CD8-positive, alpha-beta T cell (primary cell): ENCODE measurements at regions of chr1 and their contacts with region 1.

Region 1: GRCh38 chr1:27392096-27392777 is at the start of gene GPR3:
- DNase-seq: peak; percentile 79 to 96 (median 92)
- ATAC-seq: peak; percentile 89
- H3K4me3 ChIP-seq: peak within 1 kb of the TSS; percentile 31 to 65
- H3K4me3 Mint-ChIP-seq: peak within 1 kb of the TSS; percentile 83
- H3K27ac ChIP-seq: peak within 1 kb of the TSS in 1 of 2 experiments; percentile 32
- H3K27ac Mint-ChIP-seq: peak within 1 kb of the TSS; percentile 64
- H3K4me1 ChIP-seq: peaks cover 27% of the 10 kb centered on the region
- H3K4me1 Mint-ChIP-seq: peaks cover 12% of the 10 kb centered on the region
- H3K27me3 ChIP-seq: no peaks in the 10 kb centered on the region
- H3K27me3 Mint-ChIP-seq: no peaks in the 10 kb centered on the region
- CTCF ChIP-seq: peak; percentile 35
- total RNA-seq, gene GPR3: 1.1 TPM in 1 of 2 experiments, not detected in the other

Region 2: DNA sequence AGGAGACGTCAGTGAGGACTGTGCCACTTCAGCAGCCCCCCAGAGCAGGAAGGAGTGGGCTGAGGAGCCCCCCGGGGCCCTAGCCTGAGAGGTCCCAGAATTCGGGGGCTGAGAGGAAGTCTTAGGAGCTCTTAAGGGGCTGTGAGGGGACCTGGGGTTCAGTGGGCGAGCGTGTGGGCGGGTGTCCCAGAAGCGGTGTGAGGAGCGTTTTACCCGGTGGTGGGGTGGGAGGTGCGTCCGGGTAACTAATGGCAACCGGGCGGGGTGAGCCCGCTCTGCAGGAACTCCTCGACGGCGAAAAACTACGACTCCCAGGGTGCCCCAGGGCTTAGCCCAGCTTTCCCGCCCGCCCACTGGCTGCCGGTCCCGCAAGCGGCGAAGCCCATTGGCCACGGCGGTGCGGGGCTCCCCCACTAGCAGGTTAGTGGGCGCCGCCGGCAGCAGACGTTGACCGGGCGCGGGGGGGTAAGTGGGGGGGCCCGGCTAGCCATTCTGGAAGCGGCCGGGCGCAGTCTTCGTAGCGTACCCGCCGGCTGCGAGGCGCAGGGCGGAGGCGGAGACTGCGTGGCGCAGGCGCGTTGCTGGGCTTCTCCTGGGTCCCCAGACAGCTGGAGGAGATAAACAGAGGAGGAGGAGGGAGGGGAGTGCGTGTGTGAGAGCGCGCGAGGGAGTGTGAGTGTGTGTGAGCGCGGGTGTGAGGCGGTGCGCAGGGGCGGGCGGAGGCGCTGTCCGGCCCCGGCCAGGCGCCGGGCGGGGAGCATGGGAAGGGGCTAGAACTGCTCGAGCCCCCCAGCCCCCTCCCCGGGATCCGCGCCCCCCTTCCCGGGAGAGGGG is 158.0 kb before region 1 on chr1 and contains the start of gene WDTC1:
- CTCF ChIA-PET with region 1: no interaction called
- POLR2A ChIA-PET with region 1: no interaction called
- intact Hi-C with region 1: loop called in 1 of 2 experiments (anchors 5 kb)
- DNase-seq: peak; percentile 97 to 99 (median 98)
- ATAC-seq: peak; percentile 90
- H3K4me3 ChIP-seq: peak within 1 kb of the TSS; percentile 58 to 66
- H3K4me3 Mint-ChIP-seq: peak within 1 kb of the TSS; percentile 99
- H3K27ac ChIP-seq: peak within 1 kb of the TSS; percentile 74 to 93
- H3K27ac Mint-ChIP-seq: peak within 1 kb of the TSS; percentile 95
- H3K4me1 ChIP-seq: peaks cover 25% of the 10 kb centered on the region
- H3K4me1 Mint-ChIP-seq: peaks cover 37% of the 10 kb centered on the region
- H3K27me3 ChIP-seq: no peaks in the 10 kb centered on the region
- H3K27me3 Mint-ChIP-seq: no peaks in the 10 kb centered on the region
- CTCF ChIP-seq: no peak
- total RNA-seq, gene WDTC1: 17.8 to 18.1 TPM

Region 3: GRCh38 chr1:27321813-27322577 is 70.2 kb before region 1 on chr1 and contains the start of gene TMEM222:
- CTCF ChIA-PET with region 1: interaction called, 15 read pairs
- POLR2A ChIA-PET with region 1: no interaction called
- intact Hi-C with region 1: loop called in 1 of 2 experiments (anchors 1 kb)
- DNase-seq: peak; percentile 95 to 99 (median 97)
- ATAC-seq: peak; percentile 93
- H3K4me3 ChIP-seq: peak within 1 kb of the TSS; percentile 95 to 99
- H3K4me3 Mint-ChIP-seq: peak within 1 kb of the TSS; percentile 98
- H3K27ac ChIP-seq: peak within 1 kb of the TSS; percentile 88 to 95
- H3K27ac Mint-ChIP-seq: peak within 1 kb of the TSS; percentile 97
- H3K4me1 ChIP-seq: peaks cover 40% of the 10 kb centered on the region
- H3K4me1 Mint-ChIP-seq: peaks cover 48% of the 10 kb centered on the region
- H3K27me3 ChIP-seq: no peaks in the 10 kb centered on the region
- H3K27me3 Mint-ChIP-seq: no peaks in the 10 kb centered on the region
- CTCF ChIP-seq: no peak
- total RNA-seq, gene TMEM222: 24.1 to 25.2 TPM

Region 4: DNA sequence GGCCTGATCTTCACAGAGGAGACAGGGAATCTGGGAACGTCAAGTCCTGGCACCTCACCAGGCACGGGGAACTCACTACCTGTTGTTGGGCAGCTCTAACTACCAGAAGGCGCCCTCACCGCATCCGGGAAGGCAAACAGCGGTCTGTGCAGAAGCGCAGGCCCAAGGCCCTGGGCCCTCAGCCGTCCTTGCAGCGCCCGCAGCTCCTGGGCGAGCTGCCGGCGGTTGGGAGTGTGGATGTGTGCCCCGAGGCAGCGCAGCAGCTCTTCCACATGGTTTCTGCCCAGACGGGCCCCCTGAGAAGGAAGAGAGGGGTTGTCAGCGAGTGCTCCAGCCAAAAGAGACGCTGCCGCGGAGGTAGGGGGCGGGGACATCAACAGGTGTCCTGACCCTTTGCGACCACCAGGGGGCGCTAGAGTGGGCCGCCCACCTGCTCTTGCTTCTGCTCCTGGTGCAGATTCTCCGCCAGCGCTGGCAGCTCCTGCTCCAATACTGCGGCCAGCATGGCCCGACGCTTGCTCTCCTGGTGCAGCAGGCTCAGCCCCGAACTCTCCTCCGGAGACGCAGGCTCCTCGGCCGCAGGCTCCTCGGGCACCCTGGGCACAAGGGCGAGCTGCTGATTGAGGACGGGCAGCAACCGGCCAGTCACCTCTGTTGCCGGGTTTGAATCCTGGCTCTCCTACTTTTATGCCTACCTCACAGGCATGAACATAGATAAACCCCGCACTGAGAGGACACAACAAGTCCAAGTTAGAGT is 34.8 kb before region 1 on chr1:
- CTCF ChIA-PET with region 1: interaction called, 140 read pairs
- POLR2A ChIA-PET with region 1: interaction called, 9 read pairs
- intact Hi-C with region 1: loop called (anchors 1 kb)
- DNase-seq: peak; percentile 64 to 93 (median 81)
- ATAC-seq: peak; percentile 78
- H3K4me3 ChIP-seq: peak overlapping the region; percentile 57 to 78
- H3K4me3 Mint-ChIP-seq: peak overlapping the region; percentile 86
- H3K27ac ChIP-seq: peak overlapping the region; percentile 38 to 59
- H3K27ac Mint-ChIP-seq: peak overlapping the region; percentile 89
- H3K4me1 ChIP-seq: peaks cover 46% of the 10 kb centered on the region
- H3K4me1 Mint-ChIP-seq: peaks cover 55% of the 10 kb centered on the region
- H3K27me3 ChIP-seq: no peaks in the 10 kb centered on the region
- H3K27me3 Mint-ChIP-seq: no peaks in the 10 kb centered on the region
- CTCF ChIP-seq: peak; percentile 91

Region 5: GRCh38 chr1:27556781-27557595 is 164.8 kb after region 1 on chr1:
- CTCF ChIA-PET with region 1: interaction called, 11 read pairs
- POLR2A ChIA-PET with region 1: no interaction called
- intact Hi-C with region 1: no loop called
- DNase-seq: peak; percentile 62 to 85 (median 76)
- ATAC-seq: peak; percentile 96
- H3K4me3 ChIP-seq: no peak overlapping the region
- H3K4me3 Mint-ChIP-seq: peak overlapping the region; percentile 30
- H3K27ac ChIP-seq: no peak overlapping the region
- H3K27ac Mint-ChIP-seq: peak overlapping the region; percentile 58
- H3K4me1 ChIP-seq: peaks cover 24% of the 10 kb centered on the region
- H3K4me1 Mint-ChIP-seq: peaks cover 33% of the 10 kb centered on the region
- H3K27me3 ChIP-seq: no peaks in the 10 kb centered on the region
- H3K27me3 Mint-ChIP-seq: no peaks in the 10 kb centered on the region
- CTCF ChIP-seq: peak; percentile 95